GM10248 (cell line): ENCODE measurements at regions of chr17 and their contacts with region 1.

Region 1: GRCh38 chr17:7687908-7688807 is at the start of gene WRAP53:
- DNase-seq: peak; percentile 96
- CTCF ChIP-seq: peak; percentile 99

Region 2: GRCh38 chr17:7515911-7516610 is 172.1 kb before region 1 on chr17:
- CTCF ChIA-PET with region 1: interaction called, 10 read pairs
- POLR2A ChIA-PET with region 1: no interaction called
- DNase-seq: no peak
- CTCF ChIP-seq: no peak

Region 3: GRCh38 chr17:7614422-7615264 is 73.5 kb before region 1 on chr17 and contains the start of gene FXR2:
- CTCF ChIA-PET with region 1: interaction called, 11 read pairs
- POLR2A ChIA-PET with region 1: interaction called, 5 read pairs
- DNase-seq: peak; percentile 99
- CTCF ChIP-seq: peak; percentile 57

Region 4: GRCh38 chr17:7632492-7632894 is 55.7 kb before region 1 on chr17:
- CTCF ChIA-PET with region 1: interaction called, 112 read pairs
- POLR2A ChIA-PET with region 1: interaction called, 9 read pairs
- DNase-seq: peak; percentile 71
- CTCF ChIP-seq: peak; percentile 45

Region 5: GRCh38 chr17:7673239-7673638 is 14.9 kb before region 1 on chr17:
- CTCF ChIA-PET with region 1: interaction called, 21 read pairs
- POLR2A ChIA-PET with region 1: interaction called, 3 read pairs
- DNase-seq: no peak
- CTCF ChIP-seq: peak; percentile 27